Ascending aorta (tissue), 2 donors: ENCODE measurements at regions of chr1 and their contacts with region 1.

Region 1: GRCh38 chr1:210400043-210400840 is 71.5 kb downstream of the HHAT start:
- DNase-seq: peak in 1 of 2 donors; percentile 75
- H3K4me3 ChIP-seq: no peak overlapping the region
- H3K27ac ChIP-seq: no peak overlapping the region
- H3K4me1 ChIP-seq: no peaks in the 10 kb centered on the region
- H3K27me3 ChIP-seq: no peaks in the 10 kb centered on the region
- CTCF ChIP-seq: peak; percentile 59 to 86 (median 74)

Region 2: GRCh38 chr1:210143465-210144062 is 256.7 kb before region 1 on chr1:
- intact Hi-C with region 1: loop called (anchors 2 kb)
- DNase-seq: peak in 1 of 2 donors; percentile 81
- H3K4me3 ChIP-seq: no peak overlapping the region
- H3K27ac ChIP-seq: no peak overlapping the region
- H3K4me1 ChIP-seq: no peaks in the 10 kb centered on the region
- H3K27me3 ChIP-seq: no peaks in the 10 kb centered on the region
- CTCF ChIP-seq: peak; percentile 38 to 71 (median 42)

Region 3: GRCh38 chr1:210239349-210240111 is 160.7 kb before region 1 on chr1:
- intact Hi-C with region 1: loop called (anchors 5 kb)
- DNase-seq: peak in 1 of 2 donors; percentile 79
- H3K4me3 ChIP-seq: no peak overlapping the region
- H3K27ac ChIP-seq: peak overlapping the region; percentile 62 to 66
- H3K4me1 ChIP-seq: peaks cover 3 to 55% of the 10 kb centered on the region in 2 donors
- H3K27me3 ChIP-seq: no peaks in the 10 kb centered on the region
- CTCF ChIP-seq: peak in 2 of 3 experiments; percentile 40 to 45

Region 4: GRCh38 chr1:210311726-210312493 is 88.3 kb before region 1 on chr1:
- intact Hi-C with region 1: loop called (anchors 2 kb)
- DNase-seq: no peak
- H3K4me3 ChIP-seq: peak overlapping the region; percentile 42 to 69
- H3K27ac ChIP-seq: peak overlapping the region; percentile 41 to 73
- H3K4me1 ChIP-seq: peaks cover 0 to 5% of the 10 kb centered on the region in 2 donors
- H3K27me3 ChIP-seq: no peaks in the 10 kb centered on the region
- CTCF ChIP-seq: no peak

Region 5: GRCh38 chr1:210360852-210361477 is 39.3 kb before region 1 on chr1:
- intact Hi-C with region 1: loop called (anchors 1 kb)
- DNase-seq: no peak
- H3K4me3 ChIP-seq: no peak overlapping the region
- H3K27ac ChIP-seq: no peak overlapping the region
- H3K4me1 ChIP-seq: peaks cover 0 to 10% of the 10 kb centered on the region in 2 donors
- H3K27me3 ChIP-seq: no peaks in the 10 kb centered on the region
- CTCF ChIP-seq: peak; percentile 35 to 68 (median 57)